T-cell (primary cell): ENCODE measurements at regions of chr2 and their contacts with region 1.

Region 1: GRCh38 chr2:109586687-109587086 is 27.1 kb downstream of the SEPTIN10 start:
- DNase-seq: no peak
- ATAC-seq: no peak
- H3K4me3 ChIP-seq: no peak overlapping the region
- H3K4me3 Mint-ChIP-seq: no peak overlapping the region
- H3K27ac ChIP-seq: no peak overlapping the region
- H3K27ac Mint-ChIP-seq: no peak overlapping the region
- H3K4me1 ChIP-seq: no peaks in the 10 kb centered on the region
- H3K4me1 Mint-ChIP-seq: no peaks in the 10 kb centered on the region
- H3K27me3 ChIP-seq: peaks cover 0 to 10% of the 10 kb centered on the region in 2 experiments
- H3K27me3 Mint-ChIP-seq: peaks cover 1 to 18% of the 10 kb centered on the region in 2 donors

Region 2: GRCh38 chr2:108971661-108972566 is 614.8 kb before region 1 on chr2:
- CTCF ChIA-PET with region 1: no interaction called
- POLR2A ChIA-PET with region 1: no interaction called
- DNase-seq: no peak
- ATAC-seq: peak in 3 of 4 experiments; percentile 32 to 50 (median 39)
- H3K4me3 ChIP-seq: peak overlapping the region in 1 of 2 donors; percentile 0
- H3K4me3 Mint-ChIP-seq: peak overlapping the region in 1 of 3 donors; percentile 39
- H3K27ac ChIP-seq: no peak overlapping the region
- H3K27ac Mint-ChIP-seq: peak overlapping the region in 1 of 2 donors; percentile 70
- H3K4me1 ChIP-seq: peaks cover 25 to 46% of the 10 kb centered on the region in 2 experiments
- H3K4me1 Mint-ChIP-seq: peaks cover 80 to 87% (median 83%) of the 10 kb centered on the region in 3 donors
- H3K27me3 ChIP-seq: no peaks in the 10 kb centered on the region
- H3K27me3 Mint-ChIP-seq: no peaks in the 10 kb centered on the region

Region 3: GRCh38 chr2:109537565-109538222 is 49.0 kb before region 1 on chr2:
- CTCF ChIA-PET with region 1: no interaction called
- POLR2A ChIA-PET with region 1: no interaction called
- DNase-seq: no peak
- ATAC-seq: no peak
- H3K4me3 ChIP-seq: no peak overlapping the region
- H3K4me3 Mint-ChIP-seq: no peak overlapping the region
- H3K27ac ChIP-seq: no peak overlapping the region
- H3K27ac Mint-ChIP-seq: no peak overlapping the region
- H3K4me1 ChIP-seq: no peaks in the 10 kb centered on the region
- H3K4me1 Mint-ChIP-seq: no peaks in the 10 kb centered on the region
- H3K27me3 ChIP-seq: peaks cover 2 to 3% of the 10 kb centered on the region in 2 experiments
- H3K27me3 Mint-ChIP-seq: peaks cover 0 to 11% of the 10 kb centered on the region in 2 donors

Region 4: GRCh38 chr2:109563980-109564550 is 22.6 kb before region 1 on chr2:
- CTCF ChIA-PET with region 1: interaction called in 1 of 2 experiments, 10 read pairs
- POLR2A ChIA-PET with region 1: interaction called in 1 of 2 experiments, 3 read pairs
- DNase-seq: no peak
- ATAC-seq: no peak
- H3K4me3 ChIP-seq: no peak overlapping the region
- H3K4me3 Mint-ChIP-seq: no peak overlapping the region
- H3K27ac ChIP-seq: no peak overlapping the region
- H3K27ac Mint-ChIP-seq: no peak overlapping the region
- H3K4me1 ChIP-seq: no peaks in the 10 kb centered on the region
- H3K4me1 Mint-ChIP-seq: no peaks in the 10 kb centered on the region
- H3K27me3 ChIP-seq: peaks cover 0 to 2% of the 10 kb centered on the region in 2 experiments
- H3K27me3 Mint-ChIP-seq: peaks cover 0 to 2% of the 10 kb centered on the region in 2 donors